ENCODE measurements at regions of chr1 and their contacts with region 1.

Region 1: DNA sequence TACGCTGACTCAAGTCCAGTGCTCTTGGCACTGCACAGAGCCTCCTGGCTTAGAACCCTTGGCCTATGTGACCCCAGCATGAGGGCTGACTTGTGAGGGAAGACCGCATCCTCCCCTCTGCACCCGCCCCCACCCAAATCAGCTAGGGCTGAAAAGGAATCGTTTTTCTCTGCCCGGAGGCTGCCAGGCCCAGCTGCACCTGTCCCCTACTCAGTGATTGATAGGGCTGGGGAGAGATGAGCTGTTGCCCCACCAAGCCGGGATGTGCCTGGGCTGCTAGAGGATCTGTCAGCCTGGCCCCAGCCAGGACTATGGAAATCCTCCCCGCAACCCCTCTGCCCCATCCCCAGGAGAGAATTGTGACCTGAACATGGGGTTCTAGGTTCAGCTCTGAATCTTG is 20.6 kb downstream of the MYOG start:
- DNase-seq: no peak
- H3K4me3 ChIP-seq: no peak overlapping the region
- H3K27ac ChIP-seq: no peak overlapping the region
- H3K4me1 ChIP-seq: no peaks in the 10 kb centered on the region
- CTCF ChIP-seq: no peak

Region 2: GRCh38 chr1:203077956-203078355 is 12.8 kb after region 1 on chr1:
- CTCF ChIA-PET with region 1: interaction called, 12 read pairs
- POLR2A ChIA-PET with region 1: no interaction called
- intact Hi-C with region 1: no loop called
- DNase-seq: no peak
- H3K4me3 ChIP-seq: no peak overlapping the region
- H3K27ac ChIP-seq: no peak overlapping the region
- H3K4me1 ChIP-seq: no peaks in the 10 kb centered on the region
- CTCF ChIP-seq: no peak

Region 3: DNA sequence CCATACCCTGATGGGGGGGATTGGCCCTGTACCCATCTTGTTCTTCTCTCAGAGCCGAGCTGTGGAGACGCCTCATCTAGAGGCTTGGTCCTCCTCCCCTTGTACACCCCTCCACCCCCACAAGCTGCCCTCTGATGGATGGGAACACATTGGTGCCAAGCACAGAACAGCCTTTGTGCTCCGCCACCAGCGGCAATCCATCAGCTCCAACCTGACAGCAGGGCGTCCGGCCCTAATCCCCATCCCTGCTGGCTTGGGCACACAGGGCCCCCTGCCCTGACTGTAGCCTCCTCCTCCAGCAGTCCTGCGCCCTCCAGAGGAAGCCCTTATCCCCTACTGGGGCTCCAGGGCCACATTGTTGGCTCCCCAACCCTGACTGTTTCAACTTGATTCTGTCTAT is 24.5 kb after region 1 on chr1:
- CTCF ChIA-PET with region 1: no interaction called
- POLR2A ChIA-PET with region 1: no interaction called
- intact Hi-C with region 1: no loop called
- DNase-seq: no peak
- H3K4me3 ChIP-seq: no peak overlapping the region
- H3K27ac ChIP-seq: no peak overlapping the region
- H3K4me1 ChIP-seq: no peaks in the 10 kb centered on the region
- CTCF ChIP-seq: no peak